Activated naive CD4-positive, alpha-beta T cell treated with anti-CD3 and anti-CD28 coated beads for 36 hours (primary cell): ENCODE measurements at regions of chr6 and their contacts with region 1.

Region 1: GRCh38 chr6:32885698-32886286 is 31.8 kb downstream of the PSMB9 start:
- DNase-seq: no peak
- H3K4me3 Mint-ChIP-seq: no peak overlapping the region
- H3K27ac Mint-ChIP-seq: no peak overlapping the region
- H3K4me1 Mint-ChIP-seq: peaks cover 9% of the 10 kb centered on the region
- H3K27me3 Mint-ChIP-seq: no peaks in the 10 kb centered on the region

Region 2: GRCh38 chr6:32752580-32752979 is 133.2 kb before region 1 on chr6:
- CTCF ChIA-PET with region 1: no interaction called
- intact Hi-C with region 1: no loop called
- DNase-seq: no peak
- H3K4me3 Mint-ChIP-seq: no peak overlapping the region
- H3K27ac Mint-ChIP-seq: no peak overlapping the region
- H3K4me1 Mint-ChIP-seq: no peaks in the 10 kb centered on the region
- H3K27me3 Mint-ChIP-seq: peaks cover 17% of the 10 kb centered on the region

Region 3: DNA sequence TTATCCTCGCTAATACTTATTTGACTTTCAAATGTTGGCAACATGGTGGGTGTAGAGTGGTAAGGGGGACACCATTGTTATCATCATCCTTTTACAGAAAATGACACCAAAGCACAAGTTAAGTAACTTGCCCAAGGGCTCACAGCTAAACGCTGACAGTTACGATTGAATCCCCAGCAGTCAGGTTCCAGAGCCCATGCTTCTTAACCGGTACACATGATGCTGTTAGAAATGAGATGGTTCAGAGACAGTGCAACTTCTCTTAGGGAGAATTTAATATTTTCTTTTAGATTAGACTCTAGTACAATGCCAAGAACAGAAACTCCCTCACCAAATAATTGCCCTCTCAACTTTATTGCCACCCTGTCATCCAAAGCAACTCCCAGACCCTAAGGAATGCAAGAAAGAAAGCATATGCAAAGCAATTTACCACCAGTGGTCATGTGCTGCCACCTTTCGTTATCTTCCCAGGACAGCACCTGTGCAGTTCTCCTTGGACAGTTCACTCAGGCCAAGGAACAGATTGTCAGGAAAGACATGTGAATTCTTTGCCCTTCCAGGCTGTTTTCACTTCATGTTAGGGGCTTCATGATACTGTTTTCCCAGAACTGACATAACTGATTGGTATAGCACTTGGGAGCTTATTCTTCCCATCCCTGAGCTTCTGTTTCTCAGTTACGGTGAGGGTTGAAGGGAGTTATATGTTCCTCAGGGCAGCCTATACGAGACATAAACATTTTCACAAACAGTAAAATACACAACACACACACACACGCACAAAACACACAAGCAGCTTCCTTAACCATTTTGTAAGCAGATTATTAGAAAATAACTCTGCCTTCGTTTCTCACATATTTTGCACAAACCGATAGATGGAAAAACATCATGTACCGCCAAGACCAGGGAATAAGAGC is 62.0 kb after region 1 on chr6:
- CTCF ChIA-PET with region 1: interaction called, 25 read pairs
- intact Hi-C with region 1: loop called (anchors 1 kb)
- DNase-seq: peak; percentile 70
- H3K4me3 Mint-ChIP-seq: no peak overlapping the region
- H3K27ac Mint-ChIP-seq: no peak overlapping the region
- H3K4me1 Mint-ChIP-seq: peaks cover 52% of the 10 kb centered on the region
- H3K27me3 Mint-ChIP-seq: no peaks in the 10 kb centered on the region

Region 4: GRCh38 chr6:33073431-33073871 is 187.7 kb after region 1 on chr6 and contains the start of gene HLA-DPA1:
- CTCF ChIA-PET with region 1: no interaction called
- intact Hi-C with region 1: no loop called
- DNase-seq: peak; percentile 52
- H3K4me3 Mint-ChIP-seq: peak within 1 kb of the TSS; percentile 67
- H3K27ac Mint-ChIP-seq: peak within 1 kb of the TSS; percentile 14
- H3K4me1 Mint-ChIP-seq: peaks cover 25% of the 10 kb centered on the region
- H3K27me3 Mint-ChIP-seq: peaks cover 4% of the 10 kb centered on the region
- total RNA-seq, gene HLA-DPA1: 12.1 to 15.3 TPM